Activated T-helper 2 cell treated with anti-CD3 and anti-CD28 coated beads, Interferon-gamma antibody, Interleukin-2, Interleukin-4, amounts not matched to agents 10 μg/mL and 5 μg/mL and 100 μg/mL, durations not matched to agents 14 hours and 24 hours and 36 hours (primary cell): ENCODE measurements at regions of chr16 and their contacts with region 1.

Region 1: GRCh38 chr16:85554112-85554813 is 58.9 kb upstream of the GSE1 start:
- DNase-seq: peak; percentile 78
- H3K4me3 Mint-ChIP-seq: peak overlapping the region; percentile 91
- H3K27ac Mint-ChIP-seq: peak overlapping the region; percentile 96
- H3K4me1 Mint-ChIP-seq: peaks cover 34% of the 10 kb centered on the region
- H3K27me3 Mint-ChIP-seq: no peaks in the 10 kb centered on the region

Region 2: DNA sequence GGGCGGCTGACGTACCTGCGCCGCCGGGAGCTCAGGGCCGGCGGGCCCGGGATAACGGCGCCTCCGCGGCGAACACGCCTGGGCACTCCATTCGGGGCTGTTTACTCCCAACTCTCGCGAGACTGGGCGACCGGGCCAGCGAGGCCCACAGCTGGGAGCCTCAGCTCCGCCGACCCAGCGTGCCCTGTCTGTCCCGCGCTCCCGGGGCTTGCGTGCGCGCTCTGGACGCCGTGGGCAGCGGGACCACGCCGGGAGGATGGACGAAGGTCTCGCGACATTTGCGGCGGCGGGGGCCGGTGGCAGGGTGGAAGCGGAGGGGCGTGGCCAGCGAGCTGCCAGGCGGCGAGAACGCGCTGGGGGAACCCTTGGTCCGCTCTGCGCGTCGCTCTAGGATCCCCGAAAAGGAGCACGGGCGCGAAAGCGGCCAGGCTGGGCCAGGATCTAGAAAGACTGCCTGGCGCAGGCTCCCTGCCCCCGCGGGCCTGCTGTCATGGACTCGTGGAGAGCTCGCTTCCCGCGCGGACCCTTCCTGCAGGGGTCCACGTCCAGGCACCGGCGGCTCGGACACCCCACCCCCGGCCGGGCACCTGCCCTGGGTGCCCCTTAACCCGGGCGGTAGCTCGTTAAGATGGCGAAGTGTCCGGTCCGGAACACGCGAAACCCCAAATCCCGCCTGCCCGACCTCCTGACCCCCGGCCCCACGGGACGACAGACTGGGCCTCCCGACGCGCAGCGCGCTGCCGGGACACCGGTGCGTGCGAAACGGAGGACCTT is 1437.4 kb before region 1 on chr16 and contains the start of gene MBTPS1:
- intact Hi-C with region 1: loop called (anchors 10 kb)
- DNase-seq: peak; percentile 98
- H3K4me3 Mint-ChIP-seq: peak within 1 kb of the TSS; percentile 90
- H3K27ac Mint-ChIP-seq: peak within 1 kb of the TSS; percentile 90
- H3K4me1 Mint-ChIP-seq: peaks cover 14% of the 10 kb centered on the region
- H3K27me3 Mint-ChIP-seq: no peaks in the 10 kb centered on the region
- total RNA-seq, gene MBTPS1: 54.5 and 58.1 TPM in 2 replicates

Region 3: GRCh38 chr16:85321509-85322271 is 232.6 kb before region 1 on chr16:
- intact Hi-C with region 1: no loop called
- DNase-seq: no peak
- H3K4me3 Mint-ChIP-seq: no peak overlapping the region
- H3K27ac Mint-ChIP-seq: no peak overlapping the region
- H3K4me1 Mint-ChIP-seq: no peaks in the 10 kb centered on the region
- H3K27me3 Mint-ChIP-seq: no peaks in the 10 kb centered on the region

Region 4: DNA sequence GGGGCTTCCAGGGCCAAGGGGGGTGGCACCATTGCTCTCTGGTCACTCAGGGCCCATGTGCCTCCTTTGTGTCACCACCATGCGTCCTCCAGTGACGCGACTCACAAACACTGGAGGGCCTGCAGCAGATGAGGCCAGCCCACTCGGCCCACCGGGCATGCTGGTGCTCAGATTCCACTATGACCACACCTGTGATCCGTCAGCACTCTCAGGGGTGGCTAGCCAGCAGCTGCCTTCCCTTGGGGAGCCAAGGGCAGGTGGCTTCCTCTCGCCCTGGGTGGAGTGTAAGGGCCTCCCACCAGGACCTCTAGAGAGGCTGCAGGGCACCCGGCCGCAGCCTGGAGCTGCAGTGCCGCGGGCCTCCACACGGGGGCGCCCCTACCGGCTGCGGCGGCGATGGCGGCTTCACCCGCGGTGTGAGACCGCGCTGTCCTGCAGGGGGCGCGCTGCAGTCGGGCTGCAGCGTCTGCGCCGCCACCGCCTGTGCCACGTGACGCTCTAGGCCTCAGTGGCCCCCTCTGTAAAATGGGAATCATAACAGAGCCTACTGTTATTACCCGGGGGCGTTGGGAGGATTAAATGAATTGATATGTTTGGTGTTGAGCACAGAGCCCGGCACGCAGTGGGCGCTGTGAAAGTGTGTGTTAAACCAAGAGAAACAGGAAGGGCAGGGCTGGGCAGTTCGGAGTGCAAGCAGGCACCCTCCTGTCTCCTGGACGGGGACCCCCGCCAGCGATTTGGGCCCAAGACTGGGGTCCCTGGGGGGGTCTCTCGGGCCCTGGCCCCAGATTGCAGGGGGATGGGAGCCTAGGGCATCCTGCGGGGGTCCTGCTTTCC is 133.5 kb before region 1 on chr16:
- intact Hi-C with region 1: loop called (anchors 2 kb)
- DNase-seq: peak; percentile 66
- H3K4me3 Mint-ChIP-seq: no peak overlapping the region
- H3K27ac Mint-ChIP-seq: no peak overlapping the region
- H3K4me1 Mint-ChIP-seq: peaks cover 2% of the 10 kb centered on the region
- H3K27me3 Mint-ChIP-seq: no peaks in the 10 kb centered on the region

Region 5: DNA sequence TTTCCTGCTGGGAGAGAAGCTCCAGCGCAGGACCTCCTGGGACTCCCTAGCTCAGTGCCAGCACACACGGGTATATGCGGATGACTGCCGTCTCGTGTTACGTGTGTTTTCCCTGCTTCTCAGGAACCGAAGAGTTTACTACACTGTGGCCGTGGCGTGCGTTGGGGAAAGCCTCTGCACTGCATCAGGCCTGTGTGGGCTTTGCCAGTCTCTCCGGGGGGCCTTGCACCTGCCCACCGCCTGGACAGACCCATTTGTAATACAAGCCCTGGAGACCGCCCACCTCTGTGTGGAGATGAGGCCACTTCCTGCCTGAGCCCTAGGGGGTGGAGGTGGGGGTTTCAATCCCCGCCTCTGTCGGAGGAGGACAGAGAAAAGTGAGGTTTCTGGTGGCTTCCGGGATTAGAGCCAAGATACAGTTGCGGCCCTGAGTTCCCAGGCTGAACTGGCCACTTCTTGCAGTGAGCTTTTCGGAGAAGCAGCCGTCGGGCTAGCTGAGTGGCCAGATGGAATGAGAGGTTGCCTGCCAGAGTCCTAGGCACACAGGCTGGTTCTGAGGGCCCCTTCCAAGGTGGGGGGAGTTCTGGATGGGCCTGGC is 15.5 kb after region 1 on chr16:
- intact Hi-C with region 1: loop called (anchors 1 kb)
- DNase-seq: no peak
- H3K4me3 Mint-ChIP-seq: peak overlapping the region; percentile 47
- H3K27ac Mint-ChIP-seq: peak overlapping the region; percentile 72
- H3K4me1 Mint-ChIP-seq: peaks cover 51% of the 10 kb centered on the region
- H3K27me3 Mint-ChIP-seq: no peaks in the 10 kb centered on the region

Region 6: GRCh38 chr16:85688586-85689284 is 134.5 kb after region 1 on chr16 and contains the start of gene GINS2:
- intact Hi-C with region 1: loop called (anchors 10 kb)
- DNase-seq: peak; percentile 89
- H3K4me3 Mint-ChIP-seq: peak within 1 kb of the TSS; percentile 85
- H3K27ac Mint-ChIP-seq: peak within 1 kb of the TSS; percentile 72
- H3K4me1 Mint-ChIP-seq: peaks cover 14% of the 10 kb centered on the region
- H3K27me3 Mint-ChIP-seq: peaks cover 3% of the 10 kb centered on the region
- total RNA-seq, gene GINS2: 66.8 and 66.9 TPM in 2 replicates